Right ventricle myocardium superior (tissue), 1 donor: ENCODE measurements at regions of chr11 and their contacts with region 1.

Region 1: GRCh38 chr11:96486894-96487595 is 97.2 kb downstream of the JRKL start:
- DNase-seq: no peak
- ATAC-seq: no peak

Region 2: DNA sequence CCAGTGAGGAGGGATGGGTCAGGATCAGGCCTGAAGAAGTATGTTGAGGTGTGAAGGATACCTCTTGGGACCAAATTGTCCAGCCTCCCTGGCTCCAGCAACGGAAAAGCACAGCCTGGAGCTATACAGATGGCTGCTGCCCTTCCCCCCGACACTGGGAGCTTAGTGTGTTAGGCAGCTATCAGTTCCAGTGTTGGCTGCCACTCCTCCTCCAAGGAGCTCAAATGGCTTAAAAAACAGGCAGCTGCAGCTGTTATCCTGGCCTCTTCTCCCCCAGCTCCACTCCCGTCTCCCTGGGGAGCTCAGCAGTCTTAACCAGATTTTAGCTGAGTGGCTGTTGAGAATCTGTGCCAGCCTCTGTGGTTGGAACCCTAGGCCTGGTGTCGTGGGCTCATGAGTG is 127.8 kb after region 1 on chr11:
- intact Hi-C with region 1: loop called (anchors 10 kb)
- DNase-seq: no peak
- ATAC-seq: no peak